Aorta (tissue), 5 donors: ENCODE measurements at regions of chr9 and their contacts with region 1.

Region 1: DNA sequence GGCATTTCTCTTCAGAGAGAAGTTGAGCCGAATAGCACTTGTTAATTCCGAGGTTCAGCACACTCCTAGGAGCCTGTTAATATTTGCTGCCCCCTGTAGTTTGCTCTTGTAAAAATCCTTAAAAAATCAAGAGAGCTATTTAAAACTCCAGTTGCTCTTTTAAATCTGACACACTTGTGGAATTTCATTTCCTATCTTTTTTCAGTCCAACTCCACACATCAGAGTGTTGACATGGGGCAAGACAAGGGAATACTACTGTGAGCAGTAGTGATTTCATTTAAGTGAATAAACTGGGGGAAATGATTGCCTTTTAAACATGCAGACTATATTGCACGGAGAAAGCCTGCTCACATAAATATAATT is 1096.3 kb upstream of the DMAC1 start:
- DNase-seq: no peak
- ATAC-seq: no peak
- H3K4me3 ChIP-seq: peak overlapping the region in 1 of 2 donors; percentile 14
- H3K27ac ChIP-seq: no peak overlapping the region
- H3K4me1 ChIP-seq: no peaks in the 10 kb centered on the region
- H3K27me3 ChIP-seq: no peaks in the 10 kb centered on the region

Region 2: GRCh38 chr9:7560669-7561305 is 1335.1 kb before region 1 on chr9:
- intact Hi-C with region 1: loop called in 1 of 2 experiments (anchors 10 kb)
- DNase-seq: no peak
- ATAC-seq: no peak
- H3K4me3 ChIP-seq: no peak overlapping the region
- H3K27ac ChIP-seq: no peak overlapping the region
- H3K4me1 ChIP-seq: no peaks in the 10 kb centered on the region
- H3K27me3 ChIP-seq: no peaks in the 10 kb centered on the region

Region 3: GRCh38 chr9:8486095-8486494 is 409.7 kb before region 1 on chr9:
- intact Hi-C with region 1: loop called (anchors 5 kb)
- DNase-seq: peak in 1 of 2 donors; percentile 73
- ATAC-seq: no peak
- H3K4me3 ChIP-seq: no peak overlapping the region
- H3K27ac ChIP-seq: no peak overlapping the region
- H3K4me1 ChIP-seq: no peaks in the 10 kb centered on the region
- H3K27me3 ChIP-seq: no peaks in the 10 kb centered on the region

Region 4: GRCh38 chr9:8857926-8858595 is 37.8 kb before region 1 on chr9:
- intact Hi-C with region 1: no loop called
- DNase-seq: peak; percentile 81 to 91
- ATAC-seq: peak; percentile 90
- H3K4me3 ChIP-seq: peak overlapping the region; percentile 76 to 96
- H3K27ac ChIP-seq: peak overlapping the region in 1 of 2 donors; percentile 6
- H3K4me1 ChIP-seq: no peaks in the 10 kb centered on the region
- H3K27me3 ChIP-seq: no peaks in the 10 kb centered on the region

Region 5: GRCh38 chr9:9337129-9337528 is 441.3 kb after region 1 on chr9:
- intact Hi-C with region 1: no loop called
- DNase-seq: no peak
- ATAC-seq: no peak
- H3K4me3 ChIP-seq: no peak overlapping the region
- H3K27ac ChIP-seq: no peak overlapping the region
- H3K4me1 ChIP-seq: no peaks in the 10 kb centered on the region
- H3K27me3 ChIP-seq: no peaks in the 10 kb centered on the region